ENCODE measurements at regions of chr4 and their contacts with region 1.

Region 1: DNA sequence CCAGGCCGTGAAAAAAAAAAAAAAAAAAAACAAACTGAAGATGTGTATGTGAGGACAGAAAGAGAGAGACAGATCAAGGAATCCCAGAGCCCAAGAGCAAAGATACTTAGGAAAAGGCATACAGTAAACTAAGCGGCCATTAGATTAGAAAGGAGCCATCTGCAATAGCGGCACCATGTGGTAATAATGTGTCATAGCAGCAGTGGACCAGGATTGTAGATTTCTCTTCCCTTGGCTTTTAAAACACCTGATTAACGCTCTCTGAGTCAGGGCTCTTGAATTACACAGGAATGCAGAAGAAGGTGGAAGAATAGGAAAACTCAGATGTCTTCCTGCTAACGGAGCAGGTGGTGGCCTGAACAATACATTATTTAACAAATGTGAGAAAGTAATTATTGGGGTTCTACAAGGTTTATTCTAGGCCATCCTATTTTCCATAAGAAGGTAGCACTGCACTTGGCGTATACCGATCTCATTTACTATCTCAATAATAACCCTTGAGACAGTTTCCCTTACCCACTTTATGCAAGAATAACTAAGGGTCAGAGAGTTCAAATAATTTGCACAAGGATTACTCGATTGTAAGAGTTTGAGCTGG is 182.7 kb downstream of the KCNIP4 start:
- DNase-seq: peak; percentile 56
- H3K4me3 Mint-ChIP-seq: no peak overlapping the region
- H3K27ac Mint-ChIP-seq: peak overlapping the region; percentile 59
- H3K4me1 Mint-ChIP-seq: peaks cover 4% of the 10 kb centered on the region
- H3K27me3 Mint-ChIP-seq: peaks cover 7% of the 10 kb centered on the region

Region 2: DNA sequence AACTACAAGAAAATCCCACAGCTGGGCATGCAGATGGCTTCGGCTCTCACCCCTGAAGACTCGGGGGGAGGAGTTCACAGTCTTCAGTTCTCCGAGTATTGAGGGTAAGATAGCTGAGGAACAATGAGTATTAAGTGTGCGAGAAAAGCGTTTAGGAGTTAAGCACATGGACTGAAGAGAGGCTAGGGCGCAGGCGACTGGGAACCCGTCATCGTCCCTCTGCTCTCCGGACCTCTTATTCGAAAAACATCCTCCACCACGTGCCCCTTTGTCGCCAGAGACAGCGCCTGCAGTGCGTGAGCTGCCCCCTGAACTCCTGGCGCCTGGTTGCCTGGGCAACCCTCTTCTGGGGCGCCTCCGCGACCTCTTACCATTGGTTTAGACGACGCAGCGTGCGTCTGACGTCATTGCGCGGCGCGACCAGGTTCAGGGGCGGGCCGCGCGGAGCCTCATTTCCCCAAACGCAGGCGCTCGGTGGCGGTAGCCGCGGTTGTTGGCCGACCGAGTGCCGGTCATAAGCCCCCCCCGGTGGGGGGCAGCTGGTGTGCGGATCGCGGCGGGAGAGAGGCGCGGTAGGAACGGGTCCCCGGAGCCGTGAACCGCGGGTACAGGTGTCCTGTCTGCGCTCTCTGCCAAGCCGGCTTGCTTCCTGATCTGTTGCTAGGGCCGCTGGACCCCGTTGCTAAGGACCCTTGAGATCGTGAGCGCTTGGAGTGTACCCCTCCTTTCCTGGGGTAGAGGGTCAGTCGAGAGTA is 1065.7 kb before region 1 on chr4 and contains the start of gene PACRGL:
- CTCF ChIA-PET with region 1: no interaction called
- intact Hi-C with region 1: loop called (anchors 5 kb)
- DNase-seq: peak; percentile 93
- H3K4me3 Mint-ChIP-seq: peak within 1 kb of the TSS; percentile 89
- H3K27ac Mint-ChIP-seq: peak within 1 kb of the TSS; percentile 85
- H3K4me1 Mint-ChIP-seq: peaks cover 30% of the 10 kb centered on the region
- H3K27me3 Mint-ChIP-seq: no peaks in the 10 kb centered on the region
- total RNA-seq, gene PACRGL: 13.0 to 13.1 TPM

Region 3: GRCh38 chr4:21512353-21512752 is 253.6 kb before region 1 on chr4:
- CTCF ChIA-PET with region 1: interaction called, 4 read pairs
- intact Hi-C with region 1: loop called (anchors 1 kb)
- DNase-seq: no peak
- H3K4me3 Mint-ChIP-seq: no peak overlapping the region
- H3K27ac Mint-ChIP-seq: no peak overlapping the region
- H3K4me1 Mint-ChIP-seq: no peaks in the 10 kb centered on the region
- H3K27me3 Mint-ChIP-seq: peaks cover 2% of the 10 kb centered on the region

Region 4: DNA sequence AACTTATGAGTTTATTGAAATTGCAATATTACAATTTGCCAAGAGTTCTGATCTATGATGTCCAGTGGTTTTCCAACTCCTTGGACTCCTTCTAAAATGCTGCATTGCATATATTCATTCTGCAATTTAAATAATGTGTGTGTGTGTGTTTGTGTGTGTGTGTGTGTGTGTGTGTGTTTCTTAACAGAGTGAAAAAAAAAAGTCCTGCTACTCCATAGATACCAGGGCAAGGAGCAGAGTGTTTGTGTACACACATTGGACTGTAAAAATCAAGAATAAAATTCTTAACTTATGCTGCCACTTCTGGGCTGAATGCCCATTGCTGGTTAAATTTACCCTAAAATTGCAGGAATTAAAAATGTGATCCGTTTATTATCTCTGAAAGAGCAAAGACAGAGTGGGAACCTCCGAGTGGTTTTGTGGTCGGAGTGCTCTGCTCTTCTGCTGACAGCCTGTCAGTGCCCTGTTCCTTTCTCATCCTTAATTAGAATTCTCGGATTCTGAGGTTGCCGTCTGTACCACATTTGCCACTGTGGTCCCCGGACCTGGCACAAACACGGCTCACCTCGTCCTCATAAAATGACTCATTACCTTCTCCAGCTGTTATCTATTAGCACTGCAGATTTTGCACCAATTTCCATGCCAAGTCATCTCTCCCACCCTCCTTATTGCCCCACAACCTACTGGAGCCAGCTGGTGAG is 172.8 kb before region 1 on chr4:
- CTCF ChIA-PET with region 1: no interaction called
- intact Hi-C with region 1: no loop called
- DNase-seq: no peak
- H3K4me3 Mint-ChIP-seq: no peak overlapping the region
- H3K27ac Mint-ChIP-seq: no peak overlapping the region
- H3K4me1 Mint-ChIP-seq: no peaks in the 10 kb centered on the region
- H3K27me3 Mint-ChIP-seq: no peaks in the 10 kb centered on the region

Region 5: DNA sequence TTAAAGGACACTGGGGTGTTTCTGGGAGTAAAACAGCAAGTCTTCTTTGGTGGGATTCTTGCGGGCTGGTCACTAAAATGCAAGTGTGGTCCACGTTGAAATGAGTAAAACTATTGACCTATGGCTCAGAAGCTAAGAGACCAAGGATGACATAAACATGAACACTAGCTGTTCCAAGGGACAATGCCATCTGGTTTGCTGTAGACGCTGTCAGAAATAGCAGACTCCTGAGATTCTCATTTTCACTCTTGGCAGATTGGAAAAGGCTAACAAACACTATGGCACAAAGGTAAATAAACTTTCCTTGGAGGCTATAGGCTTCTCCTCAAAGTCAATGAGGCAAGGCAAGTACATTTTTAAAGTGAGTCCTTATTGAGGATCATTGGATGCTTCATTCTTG is 160.9 kb before region 1 on chr4:
- CTCF ChIA-PET with region 1: no interaction called
- intact Hi-C with region 1: no loop called
- DNase-seq: no peak
- H3K4me3 Mint-ChIP-seq: no peak overlapping the region
- H3K27ac Mint-ChIP-seq: no peak overlapping the region
- H3K4me1 Mint-ChIP-seq: no peaks in the 10 kb centered on the region
- H3K27me3 Mint-ChIP-seq: no peaks in the 10 kb centered on the region

Region 6: DNA sequence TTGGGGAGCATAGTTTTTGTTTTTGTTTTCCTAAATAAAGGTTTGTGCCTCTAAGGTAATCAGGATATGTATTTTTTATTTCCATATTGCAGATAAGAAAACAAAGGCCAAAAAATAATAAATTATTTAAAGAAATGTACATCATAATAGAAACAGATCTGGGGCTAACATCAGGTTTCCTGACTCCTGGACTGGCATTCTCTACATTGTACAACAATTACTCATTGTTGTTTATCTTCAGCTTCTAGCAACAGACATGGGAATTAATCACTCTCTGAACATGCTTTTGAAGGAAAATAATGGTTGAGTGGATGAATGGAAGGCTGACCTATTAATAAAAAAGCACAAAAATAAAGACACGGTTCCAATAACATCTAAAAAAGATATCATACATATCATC is 36.5 kb after region 1 on chr4:
- CTCF ChIA-PET with region 1: no interaction called
- intact Hi-C with region 1: no loop called
- DNase-seq: no peak
- H3K4me3 Mint-ChIP-seq: no peak overlapping the region
- H3K27ac Mint-ChIP-seq: no peak overlapping the region
- H3K4me1 Mint-ChIP-seq: no peaks in the 10 kb centered on the region
- H3K27me3 Mint-ChIP-seq: no peaks in the 10 kb centered on the region

Measured in activated naive CD4-positive, alpha-beta T cell treated with anti-CD3 and anti-CD28 coated beads for 36 hours (primary cell).